A673 (cell line): ENCODE measurements at regions of chr14 and their contacts with region 1.

Region 1: DNA sequence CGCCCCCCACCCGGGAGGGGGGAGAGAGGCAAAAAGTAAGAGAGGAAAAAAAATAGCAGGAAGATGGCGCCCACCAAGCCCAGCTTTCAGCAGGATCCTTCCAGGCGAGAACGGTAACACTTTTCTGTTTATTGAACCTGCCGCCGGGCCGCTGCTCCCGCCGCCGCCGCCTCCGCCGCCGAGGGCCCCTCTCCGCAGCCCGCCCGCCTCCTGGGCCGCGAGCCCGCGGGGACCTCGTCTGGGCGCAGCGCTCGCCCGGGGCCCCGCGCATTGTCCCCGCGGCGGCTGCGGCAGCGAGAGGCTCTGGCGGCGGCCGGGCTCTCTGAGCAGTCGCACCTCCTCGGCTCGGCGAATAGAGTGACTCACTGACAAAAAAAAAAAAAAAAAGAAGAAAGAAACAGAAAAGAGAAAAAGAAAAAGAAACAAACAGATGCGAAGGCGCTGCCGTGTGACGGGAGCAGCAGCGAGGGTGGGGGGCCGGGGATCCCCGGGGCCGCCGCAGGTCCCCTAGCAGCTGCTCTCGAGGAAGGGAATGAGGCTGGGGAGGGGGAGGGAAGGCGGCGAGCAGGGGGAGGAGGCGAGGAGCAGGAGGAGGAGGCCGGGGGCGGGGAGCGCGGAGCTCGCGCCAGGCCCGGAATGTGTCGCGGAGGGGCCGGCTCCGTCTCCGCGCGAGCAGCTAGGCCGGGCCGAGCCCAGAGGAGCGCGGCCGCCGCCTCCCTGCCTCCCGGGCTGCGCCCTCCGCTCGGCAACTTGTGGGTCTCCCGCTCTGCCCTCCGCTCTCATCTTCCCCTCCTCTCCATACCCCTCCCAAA is 781 bp downstream of the NPAS3 start:
- DNase-seq: peak; percentile 93
- H3K4me3 ChIP-seq: peak overlapping the region; percentile 76
- H3K27ac ChIP-seq: peak overlapping the region; percentile 98
- H3K4me1 ChIP-seq: peaks cover 54% of the 10 kb centered on the region
- H3K27me3 ChIP-seq: no peaks in the 10 kb centered on the region
- CTCF ChIP-seq: no peak

Region 2: DNA sequence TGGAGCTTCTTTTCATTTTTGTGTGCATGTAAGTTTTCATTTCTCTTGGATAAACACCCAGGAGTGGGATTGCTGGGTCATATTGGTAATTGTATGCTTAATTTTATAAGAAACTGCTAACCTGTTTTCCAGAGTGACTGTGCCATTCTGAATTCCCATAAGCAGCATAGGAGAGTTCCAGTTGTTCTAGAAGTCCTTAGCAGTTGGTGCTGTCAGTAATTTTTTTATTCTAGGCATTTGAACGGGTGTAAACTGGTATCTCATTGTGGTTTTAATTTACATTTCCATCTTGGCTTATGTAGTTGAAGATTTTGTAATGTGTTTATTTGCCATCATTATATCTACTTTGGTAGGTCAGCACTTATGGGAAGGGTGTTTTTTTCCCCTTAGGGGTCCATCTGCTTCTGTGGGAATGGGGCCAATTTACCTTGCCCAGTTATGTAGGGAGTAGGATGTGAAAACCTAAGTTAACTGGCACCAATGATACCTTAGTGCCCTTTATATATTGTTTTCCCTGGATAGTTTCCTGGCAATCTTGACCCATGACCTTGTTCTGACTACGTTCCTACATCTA is 407.4 kb before region 1 on chr14:
- CTCF ChIA-PET with region 1: no interaction called
- POLR2A ChIA-PET with region 1: no interaction called
- intact Hi-C with region 1: no loop called
- DNase-seq: no peak
- H3K4me3 ChIP-seq: no peak overlapping the region
- H3K27ac ChIP-seq: no peak overlapping the region
- H3K4me1 ChIP-seq: no peaks in the 10 kb centered on the region
- H3K27me3 ChIP-seq: no peaks in the 10 kb centered on the region
- CTCF ChIP-seq: no peak

Region 3: GRCh38 chr14:32588448-32589320 is 350.8 kb before region 1 on chr14:
- CTCF ChIA-PET with region 1: interaction called, 3 read pairs
- POLR2A ChIA-PET with region 1: no interaction called
- intact Hi-C with region 1: loop called (anchors 5 kb)
- DNase-seq: peak; percentile 70
- H3K4me3 ChIP-seq: no peak overlapping the region
- H3K27ac ChIP-seq: no peak overlapping the region
- H3K4me1 ChIP-seq: peaks cover 10% of the 10 kb centered on the region
- H3K27me3 ChIP-seq: no peaks in the 10 kb centered on the region
- CTCF ChIP-seq: peak; percentile 90

Region 4: DNA sequence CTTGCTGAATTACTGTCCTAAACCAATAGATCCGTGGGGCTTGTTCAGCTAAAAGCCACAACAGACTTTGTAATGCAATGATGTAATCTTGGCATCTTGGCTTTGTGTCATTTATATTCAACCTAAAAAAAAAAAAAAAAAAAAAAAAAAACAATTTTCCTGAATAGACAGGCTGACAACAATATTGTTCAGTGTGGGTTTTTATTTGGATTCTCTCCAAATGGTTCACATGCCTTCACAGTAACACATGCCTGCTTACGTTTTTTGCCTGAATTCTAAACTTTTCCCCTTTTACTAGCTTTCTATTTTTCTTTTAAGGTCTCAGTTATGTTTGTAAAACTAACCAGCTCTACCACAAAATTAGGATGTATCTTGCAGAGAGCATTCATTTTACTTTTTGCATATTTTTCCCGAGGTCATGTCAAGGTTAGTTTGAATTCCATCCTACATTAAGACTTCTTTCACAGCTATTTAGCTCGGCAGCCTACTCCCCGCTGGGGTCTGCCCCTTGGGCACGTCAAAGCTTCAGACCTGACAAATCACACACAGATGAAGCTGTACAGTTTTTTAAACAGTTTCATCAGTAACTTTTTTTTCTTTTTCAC is 214.5 kb before region 1 on chr14:
- CTCF ChIA-PET with region 1: no interaction called
- POLR2A ChIA-PET with region 1: no interaction called
- intact Hi-C with region 1: loop called (anchors 5 kb)
- DNase-seq: peak; percentile 95
- H3K4me3 ChIP-seq: peak overlapping the region; percentile 32
- H3K27ac ChIP-seq: peak overlapping the region; percentile 78
- H3K4me1 ChIP-seq: peaks cover 36% of the 10 kb centered on the region
- H3K27me3 ChIP-seq: no peaks in the 10 kb centered on the region
- CTCF ChIP-seq: no peak

Region 5: GRCh38 chr14:33127531-33127930 is 188.1 kb after region 1 on chr14:
- CTCF ChIA-PET with region 1: no interaction called
- POLR2A ChIA-PET with region 1: no interaction called
- intact Hi-C with region 1: loop called (anchors 5 kb)
- DNase-seq: peak; percentile 88
- H3K4me3 ChIP-seq: peak overlapping the region; percentile 15
- H3K27ac ChIP-seq: peak overlapping the region; percentile 74
- H3K4me1 ChIP-seq: peaks cover 41% of the 10 kb centered on the region
- H3K27me3 ChIP-seq: no peaks in the 10 kb centered on the region
- CTCF ChIP-seq: no peak

Region 6: DNA sequence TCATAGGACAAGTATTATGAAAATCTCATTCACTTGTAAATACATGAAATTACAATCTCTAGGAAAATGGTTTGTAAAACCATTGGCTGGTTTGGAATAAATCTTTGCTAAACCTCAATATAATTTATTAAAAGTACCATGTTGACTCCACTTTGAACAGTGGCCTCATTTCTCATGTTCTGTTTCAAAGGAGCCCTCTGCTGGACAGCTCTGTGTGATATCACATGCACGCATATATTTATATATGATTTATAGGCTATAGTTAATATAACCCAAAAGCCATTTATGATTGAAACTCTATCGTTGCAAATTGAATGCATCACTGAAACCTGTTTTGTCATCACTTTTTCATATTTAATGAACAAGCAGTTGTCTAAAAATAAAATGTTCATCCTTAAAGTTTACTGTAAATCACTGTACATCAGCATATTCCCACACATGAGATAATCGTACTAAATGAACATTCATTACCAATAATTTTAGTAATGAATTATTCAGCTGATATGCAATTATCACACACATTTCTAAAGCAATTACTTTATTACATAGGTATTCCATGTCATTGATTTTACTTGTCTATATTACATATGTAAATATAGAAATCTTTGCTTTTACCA is 493.1 kb after region 1 on chr14:
- CTCF ChIA-PET with region 1: no interaction called
- POLR2A ChIA-PET with region 1: no interaction called
- intact Hi-C with region 1: loop called (anchors 5 kb)
- DNase-seq: peak; percentile 69
- H3K4me3 ChIP-seq: no peak overlapping the region
- H3K27ac ChIP-seq: no peak overlapping the region
- H3K4me1 ChIP-seq: peaks cover 9% of the 10 kb centered on the region
- H3K27me3 ChIP-seq: no peaks in the 10 kb centered on the region
- CTCF ChIP-seq: peak; percentile 81

Region 7: GRCh38 chr14:33792720-33793368 is 853.4 kb after region 1 on chr14:
- CTCF ChIA-PET with region 1: no interaction called
- POLR2A ChIA-PET with region 1: no interaction called
- intact Hi-C with region 1: loop called (anchors 2 kb)
- DNase-seq: peak; percentile 87
- H3K4me3 ChIP-seq: no peak overlapping the region
- H3K27ac ChIP-seq: no peak overlapping the region
- H3K4me1 ChIP-seq: peaks cover 18% of the 10 kb centered on the region
- H3K27me3 ChIP-seq: no peaks in the 10 kb centered on the region
- CTCF ChIP-seq: peak; percentile 98